Right ventricle myocardium superior (tissue), 1 donor: ENCODE measurements at regions of chr5 and their contacts with region 1.

Region 1: DNA sequence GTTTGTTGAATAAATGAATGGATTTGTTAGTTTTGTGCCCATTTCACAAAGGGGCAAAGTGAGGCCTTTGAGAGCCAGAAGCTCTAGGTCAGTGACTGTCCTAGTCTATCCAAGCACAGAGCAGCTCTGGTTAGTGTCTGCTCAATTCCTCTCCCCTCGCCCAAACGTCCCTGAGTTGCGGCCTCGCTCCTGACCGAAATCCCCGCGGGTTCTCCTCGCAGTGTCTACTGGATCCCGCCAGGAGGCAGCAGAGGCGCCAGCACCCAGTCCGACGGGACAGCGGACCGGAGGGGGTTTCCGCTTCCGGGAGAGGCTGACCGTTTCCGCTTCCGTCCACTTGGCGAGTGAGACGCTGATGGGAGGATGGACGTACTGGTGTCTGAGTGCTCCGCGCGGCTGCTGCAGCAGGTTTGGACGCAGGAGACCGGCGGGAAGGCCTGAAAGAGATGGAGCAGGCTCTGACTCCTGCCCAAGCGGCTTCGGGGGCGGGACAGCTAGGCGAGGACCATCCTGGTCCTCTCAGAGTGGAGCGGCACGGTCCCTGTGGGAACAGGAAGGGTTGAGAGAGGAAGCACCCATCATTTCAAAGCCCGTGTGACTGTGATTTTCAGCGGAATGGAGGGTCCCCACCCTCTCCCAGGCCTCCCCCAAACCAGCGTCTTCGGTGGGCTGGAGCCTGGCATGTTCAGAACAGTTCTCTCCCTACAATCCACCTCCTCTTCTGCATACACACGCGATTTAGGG is at the start of gene RARS1:
- DNase-seq: peak; percentile 96
- ATAC-seq: peak; percentile 100
- total RNA-seq, gene RARS1: 41.8 TPM

Region 2: DNA sequence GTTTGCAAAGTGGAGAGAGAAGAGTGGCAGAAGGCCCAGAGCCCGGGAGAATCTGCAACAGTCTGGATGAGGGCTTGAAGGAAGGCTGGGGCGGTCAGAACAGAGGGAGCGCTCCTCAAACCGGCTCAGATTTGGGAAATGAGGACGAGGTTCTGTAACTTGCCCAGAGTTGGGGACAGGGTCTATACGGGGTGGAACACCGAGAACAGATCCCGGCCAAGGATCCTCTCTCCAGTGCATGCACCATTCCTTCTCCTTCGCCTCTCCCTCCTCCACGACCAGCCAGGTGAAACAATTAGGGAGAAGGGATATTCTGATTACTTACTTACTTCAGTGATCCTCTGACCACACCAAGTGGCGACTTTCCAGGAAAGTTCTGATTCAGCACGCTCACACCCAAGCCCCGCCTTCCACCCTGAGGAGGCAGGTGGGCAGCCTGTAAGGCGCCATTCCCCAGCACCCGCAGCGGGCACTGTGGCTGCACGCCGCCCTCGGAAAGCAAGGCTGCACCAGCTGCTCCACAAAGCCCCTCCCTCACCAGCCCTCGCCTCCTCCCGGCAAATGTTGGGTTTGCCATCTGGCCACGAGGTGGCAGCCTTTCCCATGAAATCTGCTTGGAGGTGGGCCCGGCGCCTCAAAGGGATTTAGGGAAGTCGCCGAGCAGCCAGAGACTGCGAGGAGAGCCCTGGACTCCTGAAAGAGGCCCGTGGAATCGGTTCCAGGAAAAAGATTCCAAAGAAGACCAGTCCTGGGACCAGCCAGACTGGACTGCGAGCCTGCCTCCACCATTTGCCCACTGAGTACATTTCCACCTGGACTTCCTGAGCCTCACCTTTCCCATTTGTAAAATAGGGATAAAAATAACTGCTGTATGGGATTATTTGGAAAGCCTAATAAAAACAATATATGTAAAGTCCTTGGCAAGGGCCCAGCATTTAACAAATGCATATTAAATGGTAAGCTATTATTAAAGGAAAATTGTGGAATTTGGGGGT is 217.1 kb before region 1 on chr5:
- intact Hi-C with region 1: loop called (anchors 10 kb)
- DNase-seq: peak; percentile 87
- ATAC-seq: peak; percentile 87

Region 3: DNA sequence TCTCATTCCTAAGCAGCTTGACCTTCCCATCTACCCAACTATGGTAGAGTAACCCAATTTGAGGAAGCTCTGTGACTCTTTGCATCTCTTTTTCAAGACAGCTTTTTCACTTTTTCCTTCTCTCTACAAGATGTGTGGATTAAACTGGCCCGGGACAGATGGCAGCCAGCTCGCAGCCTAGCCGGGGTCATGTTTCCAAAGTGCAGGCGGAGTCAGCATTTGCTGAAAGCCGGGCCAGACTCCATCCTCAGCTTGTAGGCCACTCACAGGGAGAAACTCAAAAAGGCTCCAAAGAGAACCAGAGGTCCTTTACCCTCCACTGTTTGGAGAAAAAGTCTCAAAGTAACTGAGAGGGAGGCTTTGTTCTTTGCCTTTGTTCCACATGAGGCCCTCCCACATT is 379.7 kb after region 1 on chr5:
- intact Hi-C with region 1: no loop called
- DNase-seq: peak; percentile 55
- ATAC-seq: no peak

Region 4: GRCh38 chr5:169826618-169827017 is 1340.3 kb after region 1 on chr5:
- intact Hi-C with region 1: no loop called
- DNase-seq: no peak
- ATAC-seq: no peak